ENCODE measurements at regions of chr19 and their contacts with region 1.

Region 1: GRCh38 chr19:17703824-17704463 is 15.3 kb upstream of the MAP1S start:
- DNase-seq: peak; percentile 89
- ATAC-seq: peak; percentile 83
- H3K4me3 Mint-ChIP-seq: no peak overlapping the region
- H3K27ac Mint-ChIP-seq: no peak overlapping the region
- H3K4me1 Mint-ChIP-seq: peaks cover 4% of the 10 kb centered on the region; the same call in 1 of the 2 replicates
- H3K27me3 Mint-ChIP-seq: peaks cover 30% of the 10 kb centered on the region
- CTCF ChIP-seq: peak; percentile 83

Region 2: GRCh38 chr19:17405250-17406038 is 298.5 kb before region 1 on chr19 and contains the start of gene BST2:
- CTCF ChIA-PET with region 1: no interaction called
- POLR2A ChIA-PET with region 1: no interaction called
- DNase-seq: no peak
- ATAC-seq: peak; percentile 44
- H3K4me3 Mint-ChIP-seq: peak within 1 kb of the TSS; percentile 74
- H3K27ac Mint-ChIP-seq: peak within 1 kb of the TSS; percentile 87
- H3K4me1 Mint-ChIP-seq: peaks cover 32% of the 10 kb centered on the region
- H3K27me3 Mint-ChIP-seq: no peaks in the 10 kb centered on the region
- CTCF ChIP-seq: no peak
- total RNA-seq, gene BST2: 22.8 to 67.7 TPM (median 61.1 TPM) in 3 replicates

Region 3: DNA sequence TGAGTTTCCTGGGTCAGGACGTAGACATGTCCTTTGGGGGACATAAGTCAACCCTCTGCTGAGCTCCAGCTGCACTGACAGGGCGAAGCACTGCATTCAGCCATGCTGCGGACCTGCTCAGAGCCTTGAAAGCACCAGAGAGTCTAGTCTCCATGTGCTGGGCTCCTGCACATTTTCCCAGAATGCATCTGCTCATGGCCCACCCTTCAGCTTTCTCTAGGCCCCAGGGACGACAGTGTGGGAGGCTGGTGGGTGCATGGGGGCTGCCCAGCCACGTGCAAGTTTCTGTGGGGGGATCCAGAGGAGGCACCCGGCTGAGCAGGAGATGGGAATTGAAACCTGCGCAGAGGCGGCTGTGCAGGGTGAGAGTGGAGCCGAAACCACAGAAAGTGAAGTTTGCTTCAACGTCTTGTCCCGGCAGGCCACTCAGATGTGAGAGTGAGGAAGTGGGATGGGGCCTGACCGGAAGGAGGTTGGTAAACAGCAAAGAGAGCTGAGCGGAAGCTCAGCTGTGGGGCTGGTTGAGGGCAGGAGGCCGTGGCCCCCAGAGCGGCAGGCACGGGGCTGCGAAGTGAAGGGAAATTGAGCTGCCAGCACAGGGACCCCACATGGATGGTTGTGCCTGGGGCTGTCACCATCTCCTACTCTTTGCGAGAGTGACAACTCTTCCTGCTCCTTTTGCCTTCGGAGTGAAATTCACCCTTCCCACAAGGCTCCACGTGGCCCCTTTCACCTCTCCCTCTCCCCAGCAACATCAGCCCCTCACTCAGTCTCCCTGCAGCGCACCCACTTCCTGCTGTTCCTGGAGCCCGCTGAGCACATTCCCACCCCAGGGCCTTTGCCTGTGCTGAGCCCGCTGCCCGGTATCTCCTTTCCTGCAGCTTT is 180.7 kb before region 1 on chr19:
- CTCF ChIA-PET with region 1: no interaction called
- POLR2A ChIA-PET with region 1: no interaction called
- DNase-seq: no peak
- ATAC-seq: no peak
- H3K4me3 Mint-ChIP-seq: no peak overlapping the region
- H3K27ac Mint-ChIP-seq: peak overlapping the region; percentile 45; the same call in 1 of the 2 replicates
- H3K4me1 Mint-ChIP-seq: peaks cover 4% of the 10 kb centered on the region; the same call in 1 of the 2 replicates
- H3K27me3 Mint-ChIP-seq: peaks cover 10% of the 10 kb centered on the region; the same call in 1 of the 2 replicates
- CTCF ChIP-seq: no peak

Region 4: DNA sequence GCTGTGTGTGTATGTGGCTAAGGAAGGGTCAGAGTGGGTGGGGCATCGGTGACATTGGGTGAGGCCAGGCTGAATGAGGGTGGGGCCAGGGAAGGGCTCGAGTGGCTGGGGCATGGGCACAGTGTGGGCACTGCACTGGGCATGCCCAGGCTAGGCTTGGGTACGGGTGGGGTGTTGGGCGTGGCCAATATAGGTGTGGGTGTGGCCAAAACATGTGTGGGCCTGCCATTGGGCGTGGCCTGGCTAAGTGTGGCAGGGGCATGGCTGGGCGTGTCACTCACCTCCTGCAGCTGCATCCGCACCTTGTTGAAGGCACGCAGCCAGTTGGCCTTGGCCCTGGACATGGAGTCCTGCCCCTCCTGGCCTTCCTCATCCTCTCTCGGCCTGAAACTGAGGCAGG is 49.0 kb before region 1 on chr19:
- CTCF ChIA-PET with region 1: no interaction called
- POLR2A ChIA-PET with region 1: no interaction called
- DNase-seq: peak; percentile 50
- ATAC-seq: peak; percentile 93
- H3K4me3 Mint-ChIP-seq: no peak overlapping the region
- H3K27ac Mint-ChIP-seq: peak overlapping the region; percentile 86
- H3K4me1 Mint-ChIP-seq: peaks cover 8% of the 10 kb centered on the region
- H3K27me3 Mint-ChIP-seq: no peaks in the 10 kb centered on the region; the same call in 1 of the 2 replicates
- CTCF ChIP-seq: no peak

Region 5: GRCh38 chr19:17687857-17688784 is 15.8 kb before region 1 on chr19 and contains the start of gene UNC13A:
- CTCF ChIA-PET with region 1: interaction called, 13 read pairs
- POLR2A ChIA-PET with region 1: interaction called, 4 read pairs
- DNase-seq: peak; percentile 89
- ATAC-seq: peak; percentile 24
- H3K4me3 Mint-ChIP-seq: peak within 1 kb of the TSS; percentile 99
- H3K27ac Mint-ChIP-seq: peak within 1 kb of the TSS; percentile 93
- H3K4me1 Mint-ChIP-seq: peaks cover 15% of the 10 kb centered on the region
- H3K27me3 Mint-ChIP-seq: no peaks in the 10 kb centered on the region; the same call in 1 of the 2 replicates
- CTCF ChIP-seq: no peak
- total RNA-seq, gene UNC13A: 40.7 to 42.9 TPM (median 41.1 TPM) in 3 replicates

Region 6: DNA sequence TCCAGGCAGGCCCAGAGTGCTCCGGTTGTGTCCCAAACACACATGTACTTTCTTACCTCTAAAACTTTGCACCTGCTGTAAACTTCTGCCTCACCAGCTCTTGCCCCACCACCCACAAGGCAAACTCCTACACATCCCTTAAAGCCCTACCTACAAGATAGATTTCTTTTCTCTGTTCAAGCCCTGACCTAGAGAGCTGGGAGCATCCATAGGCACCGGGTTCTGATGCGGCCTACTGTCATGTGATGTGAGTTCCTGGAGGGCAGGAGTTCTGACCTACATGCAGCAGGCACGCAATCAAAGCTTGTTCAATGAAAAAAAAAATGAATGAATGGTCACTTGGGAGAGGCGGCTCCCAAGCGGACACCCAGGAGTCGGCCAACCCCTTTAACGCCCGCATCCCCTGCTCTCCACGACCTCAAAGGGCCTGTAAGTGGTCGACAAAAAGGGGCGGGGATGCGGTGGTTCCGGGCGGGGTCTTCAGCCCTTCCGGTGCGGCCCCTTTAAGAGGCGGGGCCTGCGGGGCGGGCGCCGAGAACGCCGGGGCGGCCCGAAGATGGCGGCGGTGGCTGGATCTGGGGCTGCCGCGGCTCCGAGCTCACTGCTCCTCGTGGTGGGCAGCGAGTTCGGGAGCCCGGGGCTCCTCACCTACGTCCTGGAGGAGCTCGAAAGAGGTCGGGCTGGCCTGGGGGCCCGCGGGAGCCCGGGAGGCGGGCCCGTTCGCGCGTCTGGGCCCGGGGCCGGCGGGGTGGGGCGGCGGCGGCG is 15.2 kb after region 1 on chr19 and contains the start of gene MAP1S:
- CTCF ChIA-PET with region 1: interaction called, 12 read pairs
- POLR2A ChIA-PET with region 1: no interaction called
- DNase-seq: peak; percentile 89
- ATAC-seq: peak; percentile 95
- H3K4me3 Mint-ChIP-seq: peak within 1 kb of the TSS; percentile 85
- H3K27ac Mint-ChIP-seq: peak within 1 kb of the TSS; percentile 90
- H3K4me1 Mint-ChIP-seq: peaks cover 27% of the 10 kb centered on the region
- H3K27me3 Mint-ChIP-seq: no peaks in the 10 kb centered on the region
- CTCF ChIP-seq: no peak
- total RNA-seq, gene MAP1S: 115 to 124 TPM (median 120 TPM) in 3 replicates

Region 7: GRCh38 chr19:17733127-17733526 is 29.2 kb after region 1 on chr19:
- CTCF ChIA-PET with region 1: no interaction called
- POLR2A ChIA-PET with region 1: no interaction called
- DNase-seq: no peak
- ATAC-seq: no peak
- H3K4me3 Mint-ChIP-seq: no peak overlapping the region
- H3K27ac Mint-ChIP-seq: no peak overlapping the region
- H3K4me1 Mint-ChIP-seq: no peaks in the 10 kb centered on the region
- H3K27me3 Mint-ChIP-seq: no peaks in the 10 kb centered on the region
- CTCF ChIP-seq: no peak

Region 8: GRCh38 chr19:17755977-17756670 is 52.2 kb after region 1 on chr19:
- CTCF ChIA-PET with region 1: interaction called, 10 read pairs
- POLR2A ChIA-PET with region 1: no interaction called
- DNase-seq: peak; percentile 86
- ATAC-seq: peak; percentile 81
- H3K4me3 Mint-ChIP-seq: no peak overlapping the region
- H3K27ac Mint-ChIP-seq: no peak overlapping the region
- H3K4me1 Mint-ChIP-seq: peaks cover 25% of the 10 kb centered on the region
- H3K27me3 Mint-ChIP-seq: no peaks in the 10 kb centered on the region; the same call in 1 of the 2 replicates
- CTCF ChIP-seq: no peak

Measured in WTC11 (cell line).